ENCODE measurements at regions of chr6 and their contacts with region 1.

Region 1: GRCh38 chr6:89940225-89941027 is 46.2 kb downstream of the GJA10 start:
- DNase-seq: peak; percentile 86
- H3K4me3 Mint-ChIP-seq: no peak overlapping the region
- H3K27ac Mint-ChIP-seq: peak overlapping the region; percentile 74
- H3K4me1 Mint-ChIP-seq: peaks cover 70% of the 10 kb centered on the region
- H3K27me3 Mint-ChIP-seq: no peaks in the 10 kb centered on the region

Region 2: GRCh38 chr6:89611666-89612065 is 328.8 kb before region 1 on chr6:
- CTCF ChIA-PET with region 1: no interaction called
- intact Hi-C with region 1: no loop called
- DNase-seq: no peak
- H3K4me3 Mint-ChIP-seq: no peak overlapping the region
- H3K27ac Mint-ChIP-seq: no peak overlapping the region
- H3K4me1 Mint-ChIP-seq: no peaks in the 10 kb centered on the region
- H3K27me3 Mint-ChIP-seq: no peaks in the 10 kb centered on the region

Region 3: DNA sequence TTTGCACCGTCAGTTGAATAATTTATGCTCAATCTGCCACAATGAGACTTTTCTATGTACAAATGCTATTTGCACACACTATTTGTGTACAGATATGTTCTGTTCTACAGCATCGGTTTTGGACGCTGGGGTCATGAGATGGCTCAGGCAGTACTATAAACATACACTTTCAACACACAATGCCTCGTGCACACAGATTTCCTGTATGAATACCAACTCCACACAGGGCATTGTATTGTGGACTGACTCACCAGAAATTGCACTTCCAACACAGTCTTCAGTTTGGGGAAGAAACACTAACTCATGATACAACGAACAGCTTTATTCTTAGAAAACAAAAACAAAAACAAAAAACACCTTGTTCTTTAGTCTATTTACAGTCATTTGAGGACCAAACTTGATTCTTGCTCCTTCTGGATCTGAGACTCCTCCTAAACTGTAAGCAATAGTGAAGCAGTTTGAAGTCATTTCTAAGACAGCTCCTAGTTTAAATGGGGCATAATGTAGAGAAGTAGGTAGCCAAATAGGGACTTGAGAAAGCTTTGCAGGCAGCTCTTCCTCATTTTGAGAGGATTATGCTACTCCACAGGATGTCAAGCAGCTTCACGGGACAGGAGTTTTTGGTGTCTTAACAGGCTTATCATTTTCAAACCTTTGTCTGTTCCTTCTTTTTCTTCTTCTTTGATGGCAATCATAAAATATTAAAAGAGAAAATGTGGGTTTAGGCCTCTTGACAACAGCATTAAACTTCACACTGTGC is 12.5 kb before region 1 on chr6:
- CTCF ChIA-PET with region 1: interaction called, 14 read pairs
- intact Hi-C with region 1: no loop called
- DNase-seq: no peak
- H3K4me3 Mint-ChIP-seq: no peak overlapping the region
- H3K27ac Mint-ChIP-seq: peak overlapping the region; percentile 81
- H3K4me1 Mint-ChIP-seq: peaks cover 54% of the 10 kb centered on the region
- H3K27me3 Mint-ChIP-seq: no peaks in the 10 kb centered on the region

Region 4: GRCh38 chr6:89970609-89971337 is 30.3 kb after region 1 on chr6:
- CTCF ChIA-PET with region 1: interaction called, 11 read pairs
- intact Hi-C with region 1: loop called (anchors 2 kb)
- DNase-seq: peak; percentile 36
- H3K4me3 Mint-ChIP-seq: no peak overlapping the region
- H3K27ac Mint-ChIP-seq: no peak overlapping the region
- H3K4me1 Mint-ChIP-seq: peaks cover 54% of the 10 kb centered on the region
- H3K27me3 Mint-ChIP-seq: no peaks in the 10 kb centered on the region

Region 5: GRCh38 chr6:90025523-90026061 is 85.2 kb after region 1 on chr6:
- CTCF ChIA-PET with region 1: no interaction called
- intact Hi-C with region 1: no loop called
- DNase-seq: peak; percentile 85
- H3K4me3 Mint-ChIP-seq: peak overlapping the region; percentile 47
- H3K27ac Mint-ChIP-seq: peak overlapping the region; percentile 87
- H3K4me1 Mint-ChIP-seq: peaks cover 93% of the 10 kb centered on the region
- H3K27me3 Mint-ChIP-seq: no peaks in the 10 kb centered on the region

Region 6: GRCh38 chr6:90197854-90198496 is 257.5 kb after region 1 on chr6:
- CTCF ChIA-PET with region 1: interaction called, 5 read pairs
- intact Hi-C with region 1: loop called (anchors 5 kb)
- DNase-seq: peak; percentile 47
- H3K4me3 Mint-ChIP-seq: no peak overlapping the region
- H3K27ac Mint-ChIP-seq: peak overlapping the region; percentile 80
- H3K4me1 Mint-ChIP-seq: peaks cover 92% of the 10 kb centered on the region
- H3K27me3 Mint-ChIP-seq: no peaks in the 10 kb centered on the region

Region 7: DNA sequence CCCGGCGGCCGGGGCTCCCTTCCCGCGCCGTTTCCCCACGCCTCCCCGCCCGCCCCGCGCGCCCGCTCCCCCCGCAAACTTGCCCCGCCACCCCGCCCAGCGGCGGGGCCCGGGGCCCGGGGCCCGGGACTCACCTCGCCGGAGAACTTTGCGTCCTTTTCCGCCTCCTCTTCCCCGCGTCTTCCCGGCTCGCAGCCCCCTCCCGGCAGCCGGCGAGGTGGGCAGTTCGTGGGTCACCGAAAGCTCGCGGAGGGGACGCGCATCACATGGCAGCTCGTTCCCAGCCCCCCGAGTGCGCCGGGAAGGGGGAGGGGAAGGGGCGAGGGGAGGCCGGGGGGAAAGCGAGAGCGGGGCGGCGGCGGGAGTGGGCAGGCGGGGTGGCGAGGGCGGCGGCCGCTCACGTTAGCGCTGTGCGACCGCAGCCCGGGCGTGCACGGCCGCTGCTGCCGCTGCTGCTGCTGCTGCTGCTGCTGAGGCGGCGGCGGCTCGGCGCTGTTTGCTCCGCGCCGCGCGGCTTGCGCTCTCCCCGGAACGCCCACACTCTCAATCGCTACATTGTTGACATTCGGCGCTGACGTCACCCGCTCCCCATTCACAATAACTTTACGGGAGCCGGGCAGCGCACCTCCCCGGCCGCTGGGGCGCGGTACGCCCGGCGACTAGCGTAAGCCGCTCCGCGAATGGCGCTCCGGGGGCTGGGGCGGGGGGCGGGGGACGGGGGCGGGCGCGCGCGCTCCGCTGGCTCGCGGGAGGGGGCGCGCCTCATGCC is 356.1 kb after region 1 on chr6 and contains the start of gene BACH2:
- CTCF ChIA-PET with region 1: interaction called, 7 read pairs
- intact Hi-C with region 1: loop called (anchors 2 kb)
- DNase-seq: peak; percentile 99
- H3K4me3 Mint-ChIP-seq: peak within 1 kb of the TSS; percentile 86
- H3K27ac Mint-ChIP-seq: peak within 1 kb of the TSS; percentile 97
- H3K4me1 Mint-ChIP-seq: peaks cover 41% of the 10 kb centered on the region
- H3K27me3 Mint-ChIP-seq: peaks cover 2% of the 10 kb centered on the region
- total RNA-seq, gene BACH2: 75.1 to 77.9 TPM

Measured in activated naive CD4-positive, alpha-beta T cell treated with anti-CD3 and anti-CD28 coated beads for 36 hours (primary cell).